Sigmoid colon (tissue), 7 donors: ENCODE measurements at regions of chr2 and their contacts with region 1.

Region 1: GRCh38 chr2:73085691-73086360 is 14.3 kb upstream of the SFXN5 start:
- DNase-seq: peak; percentile 90
- H3K4me3 ChIP-seq: no peak overlapping the region
- H3K27ac ChIP-seq: no peak overlapping the region
- H3K4me1 ChIP-seq: peaks cover 0 to 51% (median 30%) of the 10 kb centered on the region in 4 donors
- H3K27me3 ChIP-seq: no peaks in the 10 kb centered on the region
- CTCF ChIP-seq: peak; percentile 59 to 94 (median 82)
- EP300 ChIP-seq: no peak
- POLR2A ChIP-seq: no peak

Region 2: GRCh38 chr2:72993147-72993932 is 92.5 kb before region 1 on chr2:
- intact Hi-C with region 1: loop called (anchors 10 kb)
- DNase-seq: peak; percentile 35
- H3K4me3 ChIP-seq: no peak overlapping the region
- H3K27ac ChIP-seq: no peak overlapping the region
- H3K4me1 ChIP-seq: no peaks in the 10 kb centered on the region
- H3K27me3 ChIP-seq: no peaks in the 10 kb centered on the region
- CTCF ChIP-seq: peak; percentile 37 to 85 (median 68)
- EP300 ChIP-seq: no peak
- POLR2A ChIP-seq: no peak

Region 3: GRCh38 chr2:73156539-73157124 is 70.8 kb after region 1 on chr2:
- intact Hi-C with region 1: loop called (anchors 1 kb)
- DNase-seq: peak; percentile 78
- H3K4me3 ChIP-seq: no peak overlapping the region
- H3K27ac ChIP-seq: no peak overlapping the region
- H3K4me1 ChIP-seq: peaks cover 0 to 7% (median 6%) of the 10 kb centered on the region in 4 donors
- H3K27me3 ChIP-seq: peaks cover 4 to 15% (median 10%) of the 10 kb centered on the region in 3 donors
- CTCF ChIP-seq: peak; percentile 37 to 67 (median 62)
- EP300 ChIP-seq: no peak
- POLR2A ChIP-seq: no peak

Region 4: DNA sequence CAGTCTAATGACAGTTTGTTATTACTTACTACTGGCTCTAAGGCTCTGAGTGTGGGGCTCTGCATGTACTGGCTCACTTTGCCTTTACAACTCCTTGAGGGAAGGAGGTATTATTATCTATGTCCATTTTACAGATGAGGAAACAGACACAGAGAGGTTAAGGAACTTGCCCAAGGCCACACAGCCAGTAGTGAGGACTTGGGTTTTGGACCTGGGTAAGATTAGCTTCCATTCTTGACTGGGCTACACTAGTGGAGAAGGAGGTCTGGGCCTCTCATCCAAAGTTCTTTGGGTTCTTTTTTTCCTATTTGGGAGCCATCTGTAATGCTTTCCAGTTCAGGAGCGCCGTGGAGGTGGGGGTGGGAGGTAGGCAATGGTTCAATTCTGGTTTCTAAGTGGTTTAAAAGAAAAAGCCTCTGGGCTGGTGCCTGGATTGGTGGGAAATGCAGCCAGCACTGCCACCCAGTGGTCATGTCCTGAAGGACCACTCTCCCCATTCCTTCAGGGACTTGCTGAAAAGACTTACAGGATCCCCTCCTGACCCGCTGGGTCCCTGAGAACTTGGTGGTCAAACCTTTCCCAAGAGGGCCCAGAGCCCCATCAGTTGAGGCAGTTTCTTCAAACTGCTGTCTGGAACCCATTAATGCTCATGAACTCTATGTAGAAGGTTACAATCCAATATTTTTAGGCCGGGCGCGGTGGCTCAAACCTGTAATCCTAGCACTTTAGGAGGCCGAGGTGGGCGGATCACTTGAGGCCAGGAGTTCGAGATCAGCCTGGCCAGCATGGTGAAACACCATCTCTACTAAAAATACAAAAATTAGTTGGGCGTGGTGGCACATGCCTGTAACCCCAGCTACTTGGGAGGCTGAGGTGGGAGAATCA is 77.9 kb after region 1 on chr2:
- intact Hi-C with region 1: loop called (anchors 2 kb)
- DNase-seq: peak; percentile 79
- H3K4me3 ChIP-seq: no peak overlapping the region
- H3K27ac ChIP-seq: no peak overlapping the region
- H3K4me1 ChIP-seq: no peaks in the 10 kb centered on the region
- H3K27me3 ChIP-seq: no peaks in the 10 kb centered on the region
- CTCF ChIP-seq: peak; percentile 66 to 86 (median 74)
- EP300 ChIP-seq: no peak
- POLR2A ChIP-seq: no peak